WTC11 (cell line): ENCODE measurements at regions of chr10 and their contacts with region 1.

Region 1: GRCh38 chr10:53430127-53430891 is 657.7 kb upstream of the MBL2 start:
- DNase-seq: no peak
- ATAC-seq: no peak
- H3K4me3 Mint-ChIP-seq: no peak overlapping the region
- H3K27ac Mint-ChIP-seq: peak overlapping the region; percentile 35
- H3K4me1 Mint-ChIP-seq: peaks cover 40% of the 10 kb centered on the region
- H3K27me3 Mint-ChIP-seq: no peaks in the 10 kb centered on the region
- CTCF ChIP-seq: no peak

Region 2: GRCh38 chr10:53412651-53413050 is 17.7 kb before region 1 on chr10:
- CTCF ChIA-PET with region 1: no interaction called
- POLR2A ChIA-PET with region 1: no interaction called
- DNase-seq: no peak
- ATAC-seq: no peak
- H3K4me3 Mint-ChIP-seq: no peak overlapping the region
- H3K27ac Mint-ChIP-seq: no peak overlapping the region
- H3K4me1 Mint-ChIP-seq: peaks cover 24% of the 10 kb centered on the region
- H3K27me3 Mint-ChIP-seq: no peaks in the 10 kb centered on the region
- CTCF ChIP-seq: no peak

Region 3: GRCh38 chr10:53477313-53477675 is 47.0 kb after region 1 on chr10:
- CTCF ChIA-PET with region 1: no interaction called
- POLR2A ChIA-PET with region 1: interaction called, 10 read pairs
- DNase-seq: no peak
- ATAC-seq: peak; percentile 79
- H3K4me3 Mint-ChIP-seq: no peak overlapping the region
- H3K27ac Mint-ChIP-seq: peak overlapping the region; percentile 99
- H3K4me1 Mint-ChIP-seq: peaks cover 68% of the 10 kb centered on the region
- H3K27me3 Mint-ChIP-seq: no peaks in the 10 kb centered on the region
- CTCF ChIP-seq: no peak